Calu3 (cell line): ENCODE measurements at regions of chr4 and their contacts with region 1.

Region 1: GRCh38 chr4:186699290-186699689 is 24.4 kb downstream of the FAT1 start:
- DNase-seq: peak; percentile 28
- H3K4me3 Mint-ChIP-seq: peak overlapping the region; percentile 59
- H3K27ac Mint-ChIP-seq: peak overlapping the region; percentile 67
- H3K4me1 Mint-ChIP-seq: peaks cover 78% of the 10 kb centered on the region
- H3K27me3 Mint-ChIP-seq: no peaks in the 10 kb centered on the region
- CTCF ChIP-seq: no peak

Region 2: GRCh38 chr4:186685767-186686183 is 13.5 kb before region 1 on chr4:
- CTCF ChIA-PET with region 1: no interaction called
- intact Hi-C with region 1: loop called (anchors 2 kb)
- DNase-seq: no peak
- H3K4me3 Mint-ChIP-seq: peak overlapping the region; percentile 70
- H3K27ac Mint-ChIP-seq: peak overlapping the region; percentile 96
- H3K4me1 Mint-ChIP-seq: peaks cover 84% of the 10 kb centered on the region
- H3K27me3 Mint-ChIP-seq: no peaks in the 10 kb centered on the region
- CTCF ChIP-seq: no peak